ENCODE measurements at regions of chr20 and their contacts with region 1.

Region 1: GRCh38 chr20:23048283-23049200 is 930 bp downstream of the THBD start:
- DNase-seq: peak; percentile 37
- H3K4me3 Mint-ChIP-seq: no peak overlapping the region
- H3K27ac Mint-ChIP-seq: no peak overlapping the region
- H3K4me1 Mint-ChIP-seq: no peaks in the 10 kb centered on the region
- H3K27me3 Mint-ChIP-seq: peaks cover 39% of the 10 kb centered on the region

Region 2: DNA sequence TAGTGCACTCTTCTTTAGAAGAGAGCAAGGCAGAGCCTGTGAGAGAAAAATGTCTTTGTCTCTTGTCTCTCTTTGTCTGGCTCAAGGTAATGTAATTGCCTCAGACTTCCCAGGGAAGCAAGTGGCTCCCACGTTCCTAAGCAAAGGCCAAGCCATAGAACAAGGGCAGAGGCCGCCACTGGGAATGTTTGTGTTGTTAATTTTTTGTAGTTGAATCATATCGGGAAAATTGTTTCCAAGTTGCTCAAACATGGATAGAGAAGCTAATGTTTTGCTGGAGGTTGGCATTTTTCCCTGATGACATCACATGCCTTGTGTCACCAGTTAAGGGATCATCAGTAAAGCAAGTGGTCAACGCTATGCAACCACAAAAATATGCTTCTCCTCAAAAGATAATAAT is 252.7 kb before region 1 on chr20:
- CTCF ChIA-PET with region 1: no interaction called
- POLR2A ChIA-PET with region 1: no interaction called
- intact Hi-C with region 1: no loop called
- DNase-seq: no peak
- H3K4me3 Mint-ChIP-seq: no peak overlapping the region
- H3K27ac Mint-ChIP-seq: no peak overlapping the region
- H3K4me1 Mint-ChIP-seq: no peaks in the 10 kb centered on the region
- H3K27me3 Mint-ChIP-seq: peaks cover 2% of the 10 kb centered on the region

Region 3: DNA sequence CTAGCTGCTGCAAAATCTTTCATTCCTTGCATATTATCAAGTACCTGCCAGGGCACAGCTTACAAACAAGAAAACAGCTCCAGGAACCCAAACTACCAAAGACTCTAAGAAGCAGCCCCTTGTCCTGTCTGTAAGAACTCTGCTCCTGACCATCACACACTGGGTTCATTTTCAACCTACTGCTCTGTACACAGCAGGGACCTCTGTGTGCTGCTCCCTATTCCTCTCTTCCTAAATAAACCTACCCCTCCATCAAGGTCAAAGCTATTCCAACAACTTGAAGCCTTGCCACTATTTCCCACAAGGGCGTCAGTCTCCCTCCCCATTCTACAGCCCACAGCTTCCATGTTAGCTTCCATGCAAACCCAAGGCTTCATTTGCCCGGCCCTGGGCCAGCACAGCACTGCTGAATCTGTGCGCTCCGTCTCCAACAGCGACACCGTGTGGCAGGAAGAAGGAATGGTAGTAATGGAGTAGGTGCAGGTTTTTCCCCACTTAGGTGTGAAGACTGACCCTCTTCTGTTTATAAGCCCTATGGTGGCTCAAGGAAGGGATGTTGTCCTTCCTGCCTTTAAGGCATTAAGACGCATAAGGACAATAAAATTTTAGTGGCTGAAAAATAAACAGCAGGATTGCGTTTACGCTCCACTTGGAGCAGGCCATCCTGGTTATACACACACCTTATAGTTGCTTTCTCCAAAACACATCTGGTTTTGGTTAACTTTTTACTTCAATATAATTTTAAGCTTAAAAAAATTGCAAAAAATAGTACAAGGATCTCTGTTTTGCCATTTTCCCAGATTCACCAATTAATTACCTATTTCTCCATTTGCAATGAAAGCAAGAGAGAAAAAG is 186.9 kb after region 1 on chr20:
- CTCF ChIA-PET with region 1: interaction called, 5 read pairs
- POLR2A ChIA-PET with region 1: no interaction called
- intact Hi-C with region 1: loop called (anchors 5 kb)
- DNase-seq: peak; percentile 53
- H3K4me3 Mint-ChIP-seq: no peak overlapping the region
- H3K27ac Mint-ChIP-seq: no peak overlapping the region
- H3K4me1 Mint-ChIP-seq: no peaks in the 10 kb centered on the region
- H3K27me3 Mint-ChIP-seq: peaks cover 2% of the 10 kb centered on the region